Activated CD8-positive, alpha-beta T cell treated with anti-CD3 and anti-CD28 coated beads for 36 hours (primary cell): ENCODE measurements at regions of chr11 and their contacts with region 1.

Region 1: DNA sequence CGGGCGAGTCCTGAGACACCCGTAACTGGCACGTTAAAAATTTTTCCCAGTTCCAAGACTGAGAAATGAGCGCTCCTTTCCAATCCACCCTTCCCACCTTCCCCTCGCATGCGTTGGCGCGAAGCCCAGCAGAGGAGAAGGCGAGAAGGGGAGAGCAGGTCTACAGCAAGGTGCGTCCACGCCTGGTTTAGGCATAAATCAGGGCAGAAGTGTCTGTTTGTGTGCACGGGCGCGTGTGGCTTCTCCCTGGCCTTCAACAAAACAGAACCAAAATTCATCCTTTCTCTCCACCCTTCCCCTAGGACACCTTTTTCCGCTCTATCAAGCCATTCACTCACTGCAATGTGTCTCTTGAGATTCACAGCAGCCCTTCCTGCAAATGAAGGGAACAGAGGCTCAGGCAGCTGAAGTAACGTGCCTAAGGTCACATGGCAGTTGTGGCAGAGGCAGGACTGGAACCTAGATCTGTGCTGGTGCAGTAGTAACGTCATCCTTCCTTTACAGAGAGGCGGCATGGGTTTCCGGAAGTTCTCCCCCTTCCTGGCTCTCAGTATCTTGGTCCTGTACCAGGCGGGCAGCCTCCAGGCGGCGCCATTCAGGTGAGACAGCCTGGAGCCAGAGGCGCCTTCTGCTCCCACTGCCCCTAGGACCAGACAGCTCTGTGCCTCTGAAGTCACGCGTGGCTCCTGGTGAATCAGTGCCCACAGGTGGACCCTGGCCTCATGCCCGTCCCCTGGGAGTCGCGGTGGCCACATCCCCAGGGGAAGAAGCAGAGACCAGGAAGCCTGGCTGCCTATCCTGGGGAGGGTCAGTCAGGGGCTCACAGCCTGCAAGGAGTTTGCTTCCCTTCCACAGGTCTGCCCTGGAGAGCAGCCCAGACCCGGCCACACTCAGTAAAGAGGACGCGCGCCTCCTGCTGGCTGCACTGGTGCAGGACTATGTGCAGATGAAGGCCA is 1.1 kb downstream of the CALCB start:
- DNase-seq: peak; percentile 96
- ATAC-seq: peak; percentile 92
- H3K4me3 Mint-ChIP-seq: peak overlapping the region; percentile 80
- H3K27ac Mint-ChIP-seq: peak overlapping the region; percentile 83
- H3K4me1 Mint-ChIP-seq: peaks cover 14% of the 10 kb centered on the region
- H3K27me3 Mint-ChIP-seq: peaks cover 14% of the 10 kb centered on the region
- CTCF ChIP-seq: peak; percentile 94

Region 2: GRCh38 chr11:14789879-14790484 is 284.5 kb before region 1 on chr11:
- CTCF ChIA-PET with region 1: interaction called, 11 read pairs
- POLR2A ChIA-PET with region 1: no interaction called
- intact Hi-C with region 1: no loop called
- DNase-seq: no peak
- ATAC-seq: peak; percentile 47
- H3K4me3 Mint-ChIP-seq: no peak overlapping the region
- H3K27ac Mint-ChIP-seq: no peak overlapping the region
- H3K4me1 Mint-ChIP-seq: peaks cover 37% of the 10 kb centered on the region
- H3K27me3 Mint-ChIP-seq: no peaks in the 10 kb centered on the region
- CTCF ChIP-seq: peak; percentile 66

Region 3: GRCh38 chr11:14974515-14975251 is 99.8 kb before region 1 on chr11:
- CTCF ChIA-PET with region 1: interaction called, 78 read pairs
- POLR2A ChIA-PET with region 1: interaction called, 4 read pairs
- intact Hi-C with region 1: loop called (anchors 2 kb)
- DNase-seq: peak; percentile 85
- ATAC-seq: peak; percentile 70
- H3K4me3 Mint-ChIP-seq: peak overlapping the region; percentile 67
- H3K27ac Mint-ChIP-seq: no peak overlapping the region
- H3K4me1 Mint-ChIP-seq: peaks cover 34% of the 10 kb centered on the region
- H3K27me3 Mint-ChIP-seq: peaks cover 62% of the 10 kb centered on the region
- CTCF ChIP-seq: peak; percentile 80

Region 4: DNA sequence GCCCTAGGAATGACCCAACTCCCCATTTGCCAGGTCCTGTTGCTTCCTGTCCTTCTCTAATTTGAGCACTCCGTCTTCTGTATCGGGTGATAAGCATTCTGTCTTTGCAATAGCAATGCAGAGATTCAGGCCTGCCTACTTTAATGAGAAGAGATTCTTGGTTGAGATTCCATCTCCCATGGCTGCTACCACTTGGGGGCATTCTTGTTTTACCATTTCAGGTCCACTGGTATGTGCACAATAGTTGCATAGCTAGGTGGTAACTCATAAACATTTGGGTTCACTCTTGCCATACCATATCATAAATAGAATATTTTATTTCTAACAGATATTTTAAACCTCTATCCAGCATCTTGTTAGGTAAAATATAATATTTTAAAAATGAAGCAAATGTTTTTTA is 35.5 kb before region 1 on chr11:
- CTCF ChIA-PET with region 1: interaction called, 50 read pairs
- POLR2A ChIA-PET with region 1: no interaction called
- intact Hi-C with region 1: loop called (anchors 5 kb)
- DNase-seq: peak; percentile 40
- ATAC-seq: peak; percentile 47
- H3K4me3 Mint-ChIP-seq: no peak overlapping the region
- H3K27ac Mint-ChIP-seq: no peak overlapping the region
- H3K4me1 Mint-ChIP-seq: no peaks in the 10 kb centered on the region
- H3K27me3 Mint-ChIP-seq: peaks cover 5% of the 10 kb centered on the region
- CTCF ChIP-seq: no peak

Region 5: GRCh38 chr11:15101072-15101709 is 26.7 kb after region 1 on chr11:
- CTCF ChIA-PET with region 1: interaction called, 20 read pairs
- POLR2A ChIA-PET with region 1: no interaction called
- intact Hi-C with region 1: no loop called
- DNase-seq: peak; percentile 73
- ATAC-seq: peak; percentile 82
- H3K4me3 Mint-ChIP-seq: no peak overlapping the region
- H3K27ac Mint-ChIP-seq: no peak overlapping the region
- H3K4me1 Mint-ChIP-seq: no peaks in the 10 kb centered on the region
- H3K27me3 Mint-ChIP-seq: peaks cover 9% of the 10 kb centered on the region
- CTCF ChIP-seq: peak; percentile 94